Head of caudate nucleus (tissue), 42 donors: ENCODE measurements at regions of chr16 and their contacts with region 1.

Region 1: DNA sequence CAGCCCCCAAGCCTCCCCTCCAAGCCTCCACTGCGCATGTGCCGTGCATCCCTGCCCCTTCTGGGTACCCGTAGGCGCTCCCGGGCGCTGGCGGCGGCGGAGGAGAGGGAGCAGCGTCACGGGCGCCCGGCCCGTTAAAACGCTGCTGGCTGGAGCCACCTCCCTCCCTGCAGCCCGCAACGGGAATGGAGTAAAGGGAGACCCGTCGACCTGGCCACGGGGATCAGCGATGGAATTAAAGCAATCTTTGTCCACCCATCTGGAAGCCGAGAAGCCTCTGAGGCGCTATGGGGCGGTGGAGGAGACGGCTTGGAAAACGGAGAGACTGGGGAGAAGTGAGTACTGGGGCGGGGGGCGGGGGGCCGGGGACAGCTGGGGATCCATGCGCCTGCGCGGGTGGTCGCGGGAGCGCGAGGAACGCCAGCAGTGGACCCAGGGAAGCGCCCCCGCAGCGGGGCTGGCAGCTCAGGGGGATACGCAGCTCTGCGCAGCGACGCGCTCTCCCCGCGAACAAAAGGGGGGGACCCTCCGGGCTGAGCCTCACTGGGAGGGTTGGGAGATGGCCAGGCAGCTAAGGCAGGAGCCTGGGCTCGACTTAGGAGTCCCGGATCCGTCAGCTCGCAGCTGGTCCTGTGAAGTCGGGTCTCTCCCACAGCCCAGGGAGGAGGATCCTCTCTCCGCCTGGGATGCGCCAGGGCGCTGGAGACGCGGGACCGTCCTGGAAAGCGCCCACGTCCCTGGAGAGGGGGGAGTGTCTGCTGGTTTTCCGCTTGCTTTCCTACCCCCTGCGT is at the start of gene BMERB1:
- DNase-seq: peak; percentile 61 to 95 (median 87)

Region 2: DNA sequence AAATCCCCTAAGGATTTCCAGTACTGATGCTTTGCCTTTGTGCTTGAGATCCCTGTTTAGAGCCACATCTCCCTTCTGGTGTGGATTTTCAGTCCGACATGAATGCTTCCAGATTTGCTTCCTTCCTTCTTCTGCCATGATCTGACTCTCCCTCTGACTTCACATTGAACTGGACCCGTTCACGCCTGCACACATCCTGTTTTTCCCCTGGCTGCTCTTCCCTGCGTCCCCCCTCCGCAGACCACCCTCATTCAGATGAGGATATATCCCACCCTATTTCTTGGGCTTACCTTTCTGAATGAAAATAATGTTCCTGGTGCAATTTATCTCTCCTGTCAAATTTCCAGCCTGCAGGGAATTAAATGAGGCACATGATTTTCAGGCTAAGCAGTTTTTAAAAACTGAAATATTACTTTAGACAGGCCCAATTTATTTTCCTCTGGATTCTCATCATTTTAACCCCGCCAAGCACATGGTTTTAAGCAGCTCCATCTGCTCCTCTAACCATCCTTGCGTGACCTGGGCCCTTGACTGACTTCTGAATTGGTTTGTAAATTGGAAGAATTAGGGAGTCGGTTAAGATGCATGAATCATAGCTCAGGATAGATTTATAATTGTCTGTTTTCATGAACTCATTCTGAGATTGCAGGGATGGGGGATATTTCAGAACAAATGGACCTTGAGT is 59.0 kb after region 1 on chr16:
- intact Hi-C with region 1: no loop called
- DNase-seq: peak in 1 of 42 donors; percentile 29

Region 3: GRCh38 chr16:15553313-15554088 is 118.9 kb after region 1 on chr16:
- intact Hi-C with region 1: loop called (anchors 5 kb)
- DNase-seq: no peak

Region 4: GRCh38 chr16:15607700-15608396 is 173.2 kb after region 1 on chr16:
- intact Hi-C with region 1: no loop called
- DNase-seq: peak in 1 of 42 donors; percentile 67